ENCODE measurements at regions of chr12 and their contacts with region 1.

Region 1: DNA sequence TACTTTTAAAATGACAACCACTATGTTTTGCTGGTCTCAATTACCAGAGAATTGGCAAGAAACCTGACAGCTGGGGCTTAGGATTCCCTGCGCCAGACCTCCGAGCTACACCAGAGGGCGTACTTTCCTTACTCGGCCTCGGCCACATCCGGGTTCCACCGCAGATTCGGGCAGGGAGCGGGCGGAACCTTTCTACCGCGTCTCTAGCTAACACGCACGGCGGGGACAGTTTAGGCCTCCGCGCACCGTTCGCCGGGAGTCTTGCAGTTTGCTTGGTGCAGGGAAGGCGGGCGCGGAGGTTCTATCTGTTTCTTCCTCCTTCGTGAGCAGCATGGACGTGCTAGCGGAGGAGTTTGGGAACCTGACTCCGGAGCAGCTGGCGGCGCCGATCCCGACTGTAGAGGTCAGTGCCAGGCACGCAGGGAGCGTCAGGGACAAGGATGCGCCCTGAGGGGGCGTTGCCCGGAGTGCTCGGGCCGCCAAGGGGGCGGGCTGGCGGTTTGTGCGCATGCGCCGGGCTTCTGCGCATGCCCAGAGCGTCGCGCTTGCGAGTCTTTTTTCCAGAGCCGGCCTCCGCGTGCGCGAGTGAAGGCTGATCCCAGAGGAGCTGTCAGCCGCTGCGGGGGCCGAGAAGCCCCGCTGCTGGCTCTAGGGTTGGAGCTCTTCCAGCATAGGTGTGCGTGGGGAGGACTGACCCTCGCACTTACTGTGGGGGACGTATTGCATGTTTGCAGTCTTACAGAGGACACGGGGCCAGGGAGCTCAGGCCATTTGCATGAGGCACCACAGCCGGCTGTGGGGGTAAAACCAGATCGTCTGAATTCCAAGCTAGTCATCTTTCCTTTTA is at the start of gene POLR3B:
- DNase-seq: peak; percentile 92
- H3K4me3 ChIP-seq: peak within 1 kb of the TSS; percentile 92
- H3K27ac ChIP-seq: peak within 1 kb of the TSS; percentile 97
- H3K27me3 ChIP-seq: peaks cover 2% of the 10 kb centered on the region
- CTCF ChIP-seq: peak; percentile 95
- polyA plus RNA-seq, gene POLR3B: 11.0 and 14.1 TPM in 2 replicates

Region 2: GRCh38 chr12:106275458-106275857 is 82.3 kb before region 1 on chr12:
- CTCF ChIA-PET with region 1: interaction called, 3 read pairs
- POLR2A ChIA-PET with region 1: interaction called, 10 read pairs
- DNase-seq: no peak
- H3K4me3 ChIP-seq: no peak overlapping the region
- H3K27ac ChIP-seq: no peak overlapping the region
- H3K27me3 ChIP-seq: peaks cover 8% of the 10 kb centered on the region
- CTCF ChIP-seq: no peak

Region 3: DNA sequence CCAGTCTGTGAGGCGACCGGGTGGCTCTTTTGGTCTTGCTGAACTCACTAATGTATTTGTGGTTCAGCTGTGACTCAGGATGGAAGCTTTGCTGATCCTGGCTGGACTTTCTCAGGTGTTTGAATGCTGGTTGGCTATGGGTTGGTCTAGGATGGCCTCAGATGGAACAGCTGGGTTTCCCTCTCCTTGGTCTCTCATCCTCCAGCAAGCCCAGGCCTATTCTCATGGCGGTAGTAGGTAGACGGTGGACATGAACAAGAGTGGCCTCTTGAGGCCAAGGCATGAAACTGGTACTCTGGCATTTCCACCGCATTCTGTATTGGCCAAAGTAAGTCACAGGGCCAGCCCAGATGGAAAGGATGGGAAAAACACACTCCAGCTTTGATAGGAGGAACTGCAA is 12.0 kb before region 1 on chr12:
- CTCF ChIA-PET with region 1: interaction called, 24 read pairs
- POLR2A ChIA-PET with region 1: no interaction called
- DNase-seq: no peak
- H3K4me3 ChIP-seq: no peak overlapping the region
- H3K27ac ChIP-seq: no peak overlapping the region
- H3K27me3 ChIP-seq: no peaks in the 10 kb centered on the region
- CTCF ChIP-seq: peak; percentile 42

Region 4: DNA sequence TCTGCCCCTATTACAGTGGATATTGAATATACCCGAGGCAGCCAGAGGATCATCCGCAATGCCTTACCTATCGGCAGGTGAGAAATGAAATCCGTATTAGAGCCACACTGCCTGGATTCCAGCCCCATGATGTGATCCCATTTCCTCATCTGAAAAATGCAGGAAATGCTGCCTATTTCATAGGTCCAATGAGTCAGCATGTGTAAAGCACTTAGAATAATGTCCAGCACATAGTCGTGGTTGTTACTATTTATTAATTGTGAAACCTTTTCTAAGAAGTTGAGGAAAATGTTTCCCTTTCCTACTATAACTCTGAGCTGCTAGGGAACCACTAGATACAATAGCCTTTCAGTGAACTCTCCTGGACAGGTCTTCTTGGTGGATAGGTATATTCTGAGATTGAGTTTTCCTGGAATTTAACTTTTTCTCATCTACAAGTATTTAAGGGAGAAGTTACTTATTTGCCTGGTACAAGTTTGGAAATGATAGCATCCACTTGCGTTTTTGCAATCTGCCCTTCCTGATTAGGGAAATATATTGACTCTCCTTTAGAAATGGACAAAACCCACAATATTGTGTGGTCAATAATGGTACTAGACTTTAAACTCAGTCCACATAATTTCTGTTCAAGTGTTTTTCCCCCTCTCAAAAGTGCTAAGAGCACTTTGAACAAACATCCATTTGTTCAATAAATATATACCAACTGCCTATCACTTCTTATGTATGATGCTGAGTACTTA is 12.0 kb after region 1 on chr12:
- CTCF ChIA-PET with region 1: interaction called, 24 read pairs
- POLR2A ChIA-PET with region 1: interaction called, 5 read pairs
- DNase-seq: peak; percentile 55
- H3K4me3 ChIP-seq: no peak overlapping the region
- H3K27ac ChIP-seq: peak overlapping the region; percentile 41
- H3K27me3 ChIP-seq: no peaks in the 10 kb centered on the region
- CTCF ChIP-seq: no peak

Region 5: DNA sequence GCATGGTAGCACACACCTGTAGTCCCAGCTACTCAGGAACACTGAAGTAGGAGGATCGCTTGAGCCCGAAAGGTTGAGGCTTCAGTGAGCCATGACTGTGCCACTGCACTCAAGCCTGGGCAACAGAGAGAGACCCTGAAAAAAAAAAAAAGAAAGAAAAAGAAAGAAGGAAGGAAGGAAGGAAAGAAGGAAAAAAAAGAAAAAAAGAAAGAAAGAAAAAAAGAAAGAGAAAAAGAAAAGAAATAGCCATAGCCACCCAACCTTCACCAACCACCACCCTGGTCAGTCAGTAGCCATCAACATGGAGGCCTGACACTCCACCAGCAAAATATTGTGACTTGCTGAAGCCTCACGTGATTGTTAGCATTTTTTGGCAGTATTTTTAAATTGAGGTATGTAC is 576.5 kb after region 1 on chr12:
- CTCF ChIA-PET with region 1: no interaction called
- POLR2A ChIA-PET with region 1: no interaction called
- DNase-seq: no peak
- H3K4me3 ChIP-seq: no peak overlapping the region
- H3K27ac ChIP-seq: no peak overlapping the region
- H3K27me3 ChIP-seq: no peaks in the 10 kb centered on the region
- CTCF ChIP-seq: no peak

Region 6: GRCh38 chr12:107163413-107163812 is 805.6 kb after region 1 on chr12:
- CTCF ChIA-PET with region 1: no interaction called
- POLR2A ChIA-PET with region 1: no interaction called
- DNase-seq: no peak
- H3K4me3 ChIP-seq: no peak overlapping the region
- H3K27ac ChIP-seq: no peak overlapping the region
- H3K27me3 ChIP-seq: peaks cover 9% of the 10 kb centered on the region
- CTCF ChIP-seq: no peak